WTC11 (cell line): ENCODE measurements at regions of chr14 and their contacts with region 1.

Region 1: DNA sequence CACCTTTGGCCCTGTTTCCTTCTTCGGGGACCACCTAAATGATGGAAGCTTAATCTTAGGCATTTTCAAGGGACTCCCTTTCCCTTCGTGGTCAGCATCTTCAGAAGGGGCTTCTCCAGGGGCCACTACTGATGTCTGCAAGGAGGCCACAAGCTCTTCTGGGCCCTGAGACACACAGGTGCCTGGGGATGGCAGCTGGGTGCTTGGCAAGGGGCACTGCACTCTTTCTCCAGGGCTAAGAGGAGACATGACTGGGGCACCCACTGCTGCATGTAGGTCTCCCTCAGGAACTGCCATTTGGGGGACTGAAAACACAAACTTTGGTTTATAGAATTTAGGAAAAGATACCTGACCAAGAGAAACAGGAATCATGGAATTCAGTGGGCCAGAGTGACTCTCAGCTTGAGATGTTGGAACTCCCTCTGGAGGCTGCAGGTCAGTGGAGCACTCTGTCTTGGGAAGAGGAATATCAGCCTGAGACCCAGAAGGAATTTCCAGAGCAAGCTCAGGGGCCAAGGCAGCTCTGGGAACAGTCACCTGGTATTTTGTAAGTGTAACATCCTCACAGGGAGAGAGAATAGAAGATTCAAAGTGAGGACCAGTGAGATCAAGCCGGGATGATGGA is 16.0 kb downstream of the PLD4 start:
- DNase-seq: peak; percentile 9
- ATAC-seq: peak; percentile 59; the same call in 1 of the 2 replicates
- H3K4me3 Mint-ChIP-seq: no peak overlapping the region
- H3K27ac Mint-ChIP-seq: no peak overlapping the region; the same call in 1 of the 2 replicates
- H3K4me1 Mint-ChIP-seq: no peaks in the 10 kb centered on the region
- H3K27me3 Mint-ChIP-seq: peaks cover 47% of the 10 kb centered on the region
- CTCF ChIP-seq: no peak

Region 2: DNA sequence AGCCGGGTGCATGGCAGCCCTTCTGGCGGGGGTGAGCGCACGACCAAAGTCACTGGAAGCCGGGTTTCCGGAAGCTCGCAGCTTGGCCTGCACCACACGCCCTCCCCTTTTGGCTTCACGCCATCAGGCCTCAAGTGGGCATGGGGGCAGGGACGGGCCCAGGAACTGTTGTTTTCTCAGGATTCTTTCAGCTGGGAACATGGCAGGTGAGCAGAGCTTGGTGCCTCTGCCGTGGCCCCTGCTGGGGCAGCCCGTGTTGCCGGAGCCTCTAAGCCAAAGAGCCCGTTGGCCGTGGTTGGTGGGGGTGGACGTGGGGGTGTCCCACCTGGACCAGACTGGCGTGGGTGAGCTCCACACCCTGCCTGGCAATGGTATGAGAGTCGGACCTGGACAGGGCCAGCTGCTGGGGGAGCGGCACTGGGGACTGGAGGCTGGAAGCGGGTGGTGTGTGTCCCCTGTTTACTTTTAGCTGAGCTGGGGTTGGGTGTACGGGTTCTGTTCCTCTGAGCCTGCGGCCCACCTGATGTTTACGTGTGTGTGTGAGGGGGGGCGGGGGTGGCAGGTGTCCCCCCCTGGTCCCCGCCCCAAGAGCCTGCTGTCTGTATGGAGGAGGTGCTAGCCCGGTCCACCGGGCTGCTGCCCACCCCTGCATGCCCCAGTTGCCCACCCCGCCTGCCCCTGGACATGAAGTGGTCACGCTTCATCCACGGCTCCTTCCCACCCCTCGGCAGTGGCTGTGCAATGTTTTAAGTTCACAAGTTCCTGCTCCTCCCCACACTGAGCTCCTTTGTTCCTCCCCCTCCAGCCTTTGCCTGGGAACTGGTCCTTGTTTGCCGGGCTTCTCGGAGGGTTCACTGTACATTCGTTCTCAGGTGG is 44.6 kb before region 1 on chr14:
- CTCF ChIA-PET with region 1: interaction called, 24 read pairs
- POLR2A ChIA-PET with region 1: no interaction called
- DNase-seq: no peak
- ATAC-seq: no peak
- H3K4me3 Mint-ChIP-seq: no peak overlapping the region
- H3K27ac Mint-ChIP-seq: no peak overlapping the region
- H3K4me1 Mint-ChIP-seq: peaks cover 2% of the 10 kb centered on the region; the same call in 1 of the 2 replicates
- H3K27me3 Mint-ChIP-seq: no peaks in the 10 kb centered on the region; the same call in 1 of the 2 replicates
- CTCF ChIP-seq: no peak